Vagina (tissue), 2 donors: ENCODE measurements at regions of chr14 and their contacts with region 1.

Region 1: DNA sequence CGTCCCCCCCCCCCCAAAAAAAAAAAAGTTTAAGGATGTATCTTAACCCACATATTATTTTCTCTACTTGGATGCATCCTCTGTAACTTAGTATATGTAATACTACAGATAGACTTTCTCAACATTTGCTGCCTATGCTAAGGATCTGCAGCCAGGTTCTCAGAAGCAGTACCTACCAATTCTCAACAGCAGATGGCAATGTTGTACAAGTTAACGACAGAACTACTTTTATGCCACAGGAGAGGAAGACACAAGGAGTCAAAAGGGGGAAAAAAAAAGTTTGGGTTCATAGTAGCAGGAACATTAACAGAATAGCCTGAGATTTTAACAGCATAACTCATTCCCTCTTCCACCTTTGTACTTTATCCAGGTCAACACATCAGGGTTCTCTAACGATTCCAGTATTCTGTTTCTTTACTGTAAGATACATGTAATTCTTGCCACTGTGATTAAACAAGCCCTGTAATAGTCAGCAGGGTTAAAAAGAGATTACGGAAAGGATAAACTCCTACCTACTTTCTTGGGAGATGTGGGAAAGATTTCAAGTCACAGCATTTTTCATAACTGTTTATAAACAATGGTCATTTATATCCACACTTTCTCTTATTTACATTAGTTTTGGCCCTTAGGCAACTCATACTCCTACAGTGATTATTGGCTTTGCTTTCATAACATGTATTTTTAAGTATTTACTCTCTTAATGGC is 5.7 kb upstream of the NEK9 start:
- DNase-seq: no peak
- H3K4me3 ChIP-seq: no peak overlapping the region
- H3K27ac ChIP-seq: peak overlapping the region; percentile 42
- H3K4me1 ChIP-seq: peaks cover 13% of the 10 kb centered on the region
- H3K27me3 ChIP-seq: no peaks in the 10 kb centered on the region
- CTCF ChIP-seq: peak; percentile 81 to 91 (median 87)
- POLR2A ChIP-seq: no peak

Region 2: GRCh38 chr14:75175677-75176141 is 43.2 kb after region 1 on chr14:
- intact Hi-C with region 1: no loop called
- DNase-seq: no peak
- H3K4me3 ChIP-seq: peak overlapping the region; percentile 84 to 100
- H3K27ac ChIP-seq: peak overlapping the region; percentile 95
- H3K4me1 ChIP-seq: peaks cover 51% of the 10 kb centered on the region
- H3K27me3 ChIP-seq: no peaks in the 10 kb centered on the region
- CTCF ChIP-seq: no peak
- POLR2A ChIP-seq: no peak

Region 3: GRCh38 chr14:75301666-75302325 is 169.3 kb after region 1 on chr14:
- intact Hi-C with region 1: loop called (anchors 2 kb)
- DNase-seq: no peak
- H3K4me3 ChIP-seq: no peak overlapping the region
- H3K27ac ChIP-seq: no peak overlapping the region
- H3K4me1 ChIP-seq: peaks cover 7% of the 10 kb centered on the region
- H3K27me3 ChIP-seq: no peaks in the 10 kb centered on the region
- CTCF ChIP-seq: no peak
- POLR2A ChIP-seq: no peak

Region 4: GRCh38 chr14:75487155-75487671 is 354.7 kb after region 1 on chr14:
- intact Hi-C with region 1: loop called (anchors 10 kb)
- DNase-seq: no peak
- H3K4me3 ChIP-seq: no peak overlapping the region
- H3K27ac ChIP-seq: no peak overlapping the region
- H3K4me1 ChIP-seq: no peaks in the 10 kb centered on the region
- H3K27me3 ChIP-seq: no peaks in the 10 kb centered on the region
- CTCF ChIP-seq: no peak
- POLR2A ChIP-seq: no peak